ENCODE measurements at regions of chr12 and their contacts with region 1.

Region 1: DNA sequence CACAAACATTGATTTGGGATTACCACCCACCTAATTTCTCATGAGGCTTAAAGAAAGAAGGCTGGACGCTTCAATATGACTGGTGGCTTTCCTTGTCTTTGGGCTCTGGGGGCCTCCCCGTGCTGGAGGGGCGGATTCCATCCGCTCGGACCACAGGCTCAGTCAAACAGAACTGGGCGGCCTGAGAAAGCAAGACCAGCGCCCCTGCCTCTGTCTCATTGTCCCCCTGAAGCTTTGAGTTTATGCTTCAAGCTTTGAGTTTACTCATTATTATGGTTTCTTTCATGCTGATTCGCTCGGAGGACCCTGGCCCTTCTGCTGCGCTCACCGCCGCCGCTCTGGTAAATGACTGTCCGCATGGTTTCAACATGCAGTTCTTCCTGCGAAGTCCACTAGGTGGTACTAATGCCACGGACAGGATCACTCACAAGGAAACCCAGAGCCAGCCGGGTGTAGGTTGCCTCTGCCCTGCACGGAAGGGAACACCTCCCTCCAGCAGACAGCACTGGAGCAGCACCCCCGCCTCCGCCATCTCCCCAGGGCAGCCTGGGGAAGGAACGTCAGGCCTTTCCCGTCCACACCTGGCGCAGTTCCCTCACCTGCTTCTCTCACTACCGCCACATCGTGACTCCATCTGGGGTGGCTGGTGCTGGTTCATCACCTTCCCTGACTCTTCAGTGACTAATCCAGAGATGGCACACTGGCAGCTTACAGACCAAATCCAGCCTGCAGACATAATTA is 13.2 kb upstream of the TIGAR start:
- DNase-seq: peak; percentile 98
- H3K4me3 ChIP-seq: no peak overlapping the region
- H3K27ac ChIP-seq: no peak overlapping the region
- H3K4me1 ChIP-seq: peaks cover 13% of the 10 kb centered on the region
- H3K27me3 ChIP-seq: no peaks in the 10 kb centered on the region
- CTCF ChIP-seq: peak; percentile 55 to 76

Region 2: DNA sequence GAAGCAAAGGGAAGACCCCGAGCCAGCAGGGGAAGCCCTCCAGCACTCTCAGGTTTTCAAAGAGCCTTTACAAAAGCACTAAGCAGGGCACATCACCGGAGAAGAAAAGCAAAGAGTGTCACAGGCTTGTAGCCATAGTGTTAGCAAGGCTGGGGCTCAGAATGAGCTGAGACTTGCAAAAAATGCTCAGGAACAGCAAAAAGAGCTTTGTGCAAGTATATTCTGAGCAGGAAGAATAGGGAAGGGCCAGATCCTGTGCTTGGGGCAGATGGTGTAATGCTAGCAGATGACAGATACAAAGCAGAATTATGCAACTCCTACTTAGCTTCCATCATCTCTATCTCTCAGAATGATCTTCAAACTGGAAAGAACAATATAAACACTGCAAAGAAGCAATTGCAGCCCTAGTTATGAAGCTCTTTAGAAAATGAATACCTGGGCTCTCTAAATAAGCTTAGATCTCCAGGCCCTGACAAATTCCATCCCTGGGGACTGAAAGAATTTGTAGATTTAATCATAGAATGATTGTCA is 410.9 kb before region 1 on chr12:
- CTCF ChIA-PET with region 1: no interaction called
- dilution Hi-C with region 1: no loop called
- in situ Hi-C with region 1: no loop called
- intact Hi-C with region 1: no loop called
- DNase-seq: peak; percentile 37
- H3K4me3 ChIP-seq: no peak overlapping the region
- H3K27ac ChIP-seq: no peak overlapping the region
- H3K4me1 ChIP-seq: no peaks in the 10 kb centered on the region
- H3K27me3 ChIP-seq: peaks cover 5% of the 10 kb centered on the region
- CTCF ChIP-seq: no peak

Region 3: GRCh38 chr12:4320853-4321701 is 13.3 kb after region 1 on chr12 and contains the start of gene TIGAR:
- CTCF ChIA-PET with region 1: no interaction called
- dilution Hi-C with region 1: no loop called
- in situ Hi-C with region 1: no loop called
- intact Hi-C with region 1: loop called (anchors 1 kb)
- DNase-seq: peak; percentile 97
- H3K4me3 ChIP-seq: peak within 1 kb of the TSS; percentile 87 to 97 (median 90)
- H3K27ac ChIP-seq: peak within 1 kb of the TSS; percentile 87
- H3K4me1 ChIP-seq: peaks cover 14% of the 10 kb centered on the region
- H3K27me3 ChIP-seq: no peaks in the 10 kb centered on the region
- CTCF ChIP-seq: no peak
- total RNA-seq, gene TIGAR: 42.8 to 68.2 TPM

Region 4: GRCh38 chr12:4353785-4354208 is 46.0 kb after region 1 on chr12:
- CTCF ChIA-PET with region 1: no interaction called
- dilution Hi-C with region 1: no loop called
- in situ Hi-C with region 1: no loop called
- intact Hi-C with region 1: loop called (anchors 1 kb)
- DNase-seq: peak; percentile 11
- H3K4me3 ChIP-seq: no peak overlapping the region
- H3K27ac ChIP-seq: no peak overlapping the region
- H3K4me1 ChIP-seq: no peaks in the 10 kb centered on the region
- H3K27me3 ChIP-seq: no peaks in the 10 kb centered on the region
- CTCF ChIP-seq: peak; percentile 27 to 50

Region 5: GRCh38 chr12:4421590-4422031 is 113.8 kb after region 1 on chr12:
- CTCF ChIA-PET with region 1: no interaction called
- dilution Hi-C with region 1: no loop called
- in situ Hi-C with region 1: no loop called
- intact Hi-C with region 1: loop called (anchors 1 kb)
- DNase-seq: peak; percentile 17
- H3K4me3 ChIP-seq: no peak overlapping the region
- H3K27ac ChIP-seq: no peak overlapping the region
- H3K4me1 ChIP-seq: no peaks in the 10 kb centered on the region
- H3K27me3 ChIP-seq: peaks cover 2% of the 10 kb centered on the region
- CTCF ChIP-seq: peak; percentile 47 to 63

Region 6: DNA sequence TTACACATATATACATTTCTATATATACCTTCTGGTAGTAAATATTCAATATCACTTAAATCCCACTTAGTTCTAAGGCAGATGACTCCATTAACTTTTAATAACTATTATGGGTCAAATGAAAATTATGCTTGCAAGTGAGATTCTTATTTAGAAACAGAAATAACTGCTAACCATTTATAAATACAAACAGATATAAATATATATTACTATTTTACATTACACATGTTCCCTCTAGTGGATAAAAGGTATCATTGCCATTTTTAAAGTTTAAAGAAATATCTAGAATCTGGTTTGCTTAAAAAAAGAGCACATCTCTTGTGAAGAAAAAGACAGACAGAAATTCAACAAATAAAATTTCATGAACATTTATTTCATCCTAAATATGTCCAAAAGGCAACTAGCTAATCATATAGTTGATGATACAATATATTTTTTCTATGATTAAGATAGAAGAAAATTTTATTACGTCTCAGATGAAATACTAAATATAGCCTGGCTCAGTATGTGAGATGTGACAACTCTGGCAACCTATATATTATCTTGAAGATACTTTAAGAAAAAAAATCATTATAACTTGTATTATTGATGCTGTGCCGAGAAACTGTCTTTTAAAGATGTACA is 219.3 kb after region 1 on chr12:
- CTCF ChIA-PET with region 1: no interaction called
- dilution Hi-C with region 1: no loop called
- in situ Hi-C with region 1: loop called in 1 of 2 experiments (anchors 25 kb)
- intact Hi-C with region 1: loop called (anchors 5 kb)
- DNase-seq: no peak
- H3K4me3 ChIP-seq: no peak overlapping the region
- H3K27ac ChIP-seq: no peak overlapping the region
- H3K4me1 ChIP-seq: no peaks in the 10 kb centered on the region
- H3K27me3 ChIP-seq: no peaks in the 10 kb centered on the region
- CTCF ChIP-seq: peak; percentile 45 to 52